Activated naive CD4-positive, alpha-beta T cell treated with anti-CD3 and anti-CD28 coated beads for 36 hours (primary cell): ENCODE measurements at regions of chr5 and their contacts with region 1.

Region 1: DNA sequence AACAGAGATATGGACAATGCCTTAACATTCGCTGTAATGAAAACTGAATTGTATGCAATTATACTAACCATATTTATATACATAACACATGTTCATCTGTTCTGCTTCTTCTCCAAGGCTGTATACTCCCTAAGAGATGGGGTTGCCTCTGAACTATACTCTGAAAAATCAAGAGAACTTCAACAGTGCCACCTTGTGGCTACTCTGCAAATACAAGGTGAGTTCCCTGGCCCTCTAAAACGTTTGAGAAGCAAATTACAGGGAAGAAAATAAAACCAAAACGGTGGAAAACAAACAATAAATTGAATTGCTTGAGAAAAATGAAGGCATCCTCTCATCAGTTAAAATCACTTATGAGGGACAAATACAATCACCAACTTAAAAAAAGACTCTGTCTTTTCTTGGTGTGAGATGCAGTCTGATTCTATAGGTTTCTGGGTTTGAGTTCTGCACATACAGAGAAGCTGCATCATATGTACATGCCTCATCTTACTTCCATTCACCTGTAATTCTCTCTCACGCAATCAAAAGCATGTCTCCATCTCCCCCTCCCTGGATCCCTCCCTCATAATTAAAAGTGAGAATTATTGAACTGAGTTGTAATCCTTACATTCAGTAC is 98.6 kb downstream of the FBXW11 start:
- DNase-seq: peak; percentile 78
- H3K4me3 Mint-ChIP-seq: no peak overlapping the region
- H3K27ac Mint-ChIP-seq: peak overlapping the region; percentile 78
- H3K4me1 Mint-ChIP-seq: peaks cover 63% of the 10 kb centered on the region
- H3K27me3 Mint-ChIP-seq: no peaks in the 10 kb centered on the region

Region 2: DNA sequence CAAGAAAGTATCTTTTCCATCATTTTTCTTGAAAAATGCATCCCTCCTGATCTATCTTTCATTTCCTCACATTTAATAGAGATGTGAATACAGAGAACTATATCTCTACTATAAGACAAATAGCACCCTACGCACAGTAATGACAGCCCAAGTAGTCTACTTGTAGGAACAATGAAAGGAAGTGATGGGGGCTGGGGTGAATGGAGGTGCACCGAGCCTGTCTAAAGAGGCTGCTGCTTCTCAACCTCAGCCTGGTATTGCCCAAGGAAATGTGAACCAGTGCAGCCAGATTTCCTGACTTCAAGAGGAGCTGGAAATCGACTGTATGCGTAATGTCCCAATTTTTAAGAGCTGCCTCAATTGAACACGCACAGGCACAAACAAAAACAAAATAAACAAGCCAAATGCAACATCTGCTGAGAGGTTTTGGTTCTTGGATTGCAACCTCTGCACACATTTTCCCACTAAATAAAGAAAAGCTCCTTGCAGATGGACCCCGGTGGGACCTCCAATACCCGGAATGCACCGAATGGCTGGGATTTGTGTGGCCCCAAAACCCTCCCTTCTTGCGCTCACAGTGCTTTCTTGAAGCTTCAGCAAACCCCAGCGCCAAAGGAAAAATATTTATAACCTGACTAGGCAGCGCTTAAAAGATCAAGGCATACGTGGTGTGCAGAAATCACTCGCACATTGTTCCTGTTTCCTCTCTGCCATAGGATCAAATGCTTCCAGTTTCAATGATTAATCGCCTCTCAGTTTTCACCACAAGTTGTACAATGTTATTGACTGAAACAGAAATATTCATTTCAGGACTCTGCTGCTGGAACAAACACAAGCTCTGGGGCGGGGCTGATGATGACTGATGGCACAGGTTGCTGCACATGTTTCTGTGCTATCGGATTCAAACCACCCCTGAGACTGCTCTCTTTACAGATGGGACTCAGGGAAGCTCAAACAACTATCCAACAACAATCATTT is 1335.7 kb before region 1 on chr5:
- CTCF ChIA-PET with region 1: no interaction called
- intact Hi-C with region 1: loop called (anchors 2 kb)
- DNase-seq: peak; percentile 94
- H3K4me3 Mint-ChIP-seq: no peak overlapping the region
- H3K27ac Mint-ChIP-seq: no peak overlapping the region
- H3K4me1 Mint-ChIP-seq: peaks cover 20% of the 10 kb centered on the region
- H3K27me3 Mint-ChIP-seq: peaks cover 63% of the 10 kb centered on the region

Region 3: GRCh38 chr5:171387345-171387969 is 520.4 kb before region 1 on chr5 and contains the start of gene NPM1:
- CTCF ChIA-PET with region 1: no interaction called
- intact Hi-C with region 1: loop called (anchors 1 kb)
- DNase-seq: peak; percentile 98
- H3K4me3 Mint-ChIP-seq: peak within 1 kb of the TSS; percentile 98
- H3K27ac Mint-ChIP-seq: peak within 1 kb of the TSS; percentile 98
- H3K4me1 Mint-ChIP-seq: peaks cover 37% of the 10 kb centered on the region
- H3K27me3 Mint-ChIP-seq: no peaks in the 10 kb centered on the region
- total RNA-seq, gene NPM1: 3,194 to 3,467 TPM

Region 4: GRCh38 chr5:171629221-171630026 is 278.4 kb before region 1 on chr5:
- CTCF ChIA-PET with region 1: interaction called, 4 read pairs
- intact Hi-C with region 1: loop called (anchors 1 kb)
- DNase-seq: peak; percentile 35
- H3K4me3 Mint-ChIP-seq: no peak overlapping the region
- H3K27ac Mint-ChIP-seq: no peak overlapping the region
- H3K4me1 Mint-ChIP-seq: no peaks in the 10 kb centered on the region
- H3K27me3 Mint-ChIP-seq: peaks cover 28% of the 10 kb centered on the region

Region 5: GRCh38 chr5:171826132-171826531 is 81.7 kb before region 1 on chr5:
- CTCF ChIA-PET with region 1: no interaction called
- intact Hi-C with region 1: no loop called
- DNase-seq: no peak
- H3K4me3 Mint-ChIP-seq: no peak overlapping the region
- H3K27ac Mint-ChIP-seq: no peak overlapping the region
- H3K4me1 Mint-ChIP-seq: no peaks in the 10 kb centered on the region
- H3K27me3 Mint-ChIP-seq: no peaks in the 10 kb centered on the region

Region 6: DNA sequence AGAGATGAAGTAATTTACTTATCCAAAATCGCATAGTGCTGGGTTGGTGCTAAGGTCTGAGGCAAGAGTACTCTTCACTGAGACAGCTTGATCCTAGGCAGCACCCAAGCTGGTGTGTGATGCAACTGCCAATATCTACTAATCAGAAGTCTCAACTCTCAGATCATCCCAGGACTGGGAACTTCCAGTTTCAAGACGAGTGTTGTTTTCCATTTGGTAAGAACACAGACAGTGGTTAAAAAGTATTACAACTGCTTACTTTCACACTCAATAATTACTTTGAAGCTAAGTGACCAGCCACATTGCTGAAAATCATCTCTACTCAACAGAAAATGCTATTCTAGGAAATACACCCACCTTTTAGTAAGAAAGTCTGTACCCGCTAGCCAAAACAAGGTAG is 53.3 kb after region 1 on chr5:
- CTCF ChIA-PET with region 1: interaction called, 36 read pairs
- intact Hi-C with region 1: loop called (anchors 1 kb)
- DNase-seq: peak; percentile 65
- H3K4me3 Mint-ChIP-seq: no peak overlapping the region
- H3K27ac Mint-ChIP-seq: peak overlapping the region; percentile 57
- H3K4me1 Mint-ChIP-seq: peaks cover 89% of the 10 kb centered on the region
- H3K27me3 Mint-ChIP-seq: no peaks in the 10 kb centered on the region

Region 7: DNA sequence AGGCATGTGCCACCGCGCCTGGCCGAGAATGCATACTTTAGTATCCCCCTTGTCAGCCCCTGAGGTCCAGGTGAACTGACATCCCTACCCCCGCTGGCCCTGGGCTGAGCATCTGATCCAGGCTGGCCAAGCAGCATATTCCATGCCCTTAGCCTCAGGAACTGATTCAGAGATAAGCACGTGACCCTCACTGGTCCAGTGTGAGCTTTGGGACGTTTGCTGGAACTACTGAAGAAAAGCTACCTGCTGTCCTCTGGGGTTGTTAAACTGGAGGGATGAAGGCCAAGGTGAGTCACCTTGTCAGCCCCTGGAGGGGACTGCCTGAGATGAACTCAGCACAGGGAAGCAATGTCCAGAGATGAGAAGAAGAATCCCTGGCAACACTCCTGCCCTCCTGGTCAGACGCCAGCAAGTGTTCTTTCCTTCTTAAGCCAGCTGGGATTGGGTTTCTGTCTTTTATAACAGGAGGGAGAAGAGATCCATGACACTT is 157.7 kb after region 1 on chr5:
- CTCF ChIA-PET with region 1: interaction called, 60 read pairs
- intact Hi-C with region 1: loop called (anchors 2 kb)
- DNase-seq: no peak
- H3K4me3 Mint-ChIP-seq: no peak overlapping the region
- H3K27ac Mint-ChIP-seq: no peak overlapping the region
- H3K4me1 Mint-ChIP-seq: peaks cover 56% of the 10 kb centered on the region
- H3K27me3 Mint-ChIP-seq: no peaks in the 10 kb centered on the region

Region 8: GRCh38 chr5:172144291-172144815 is 236.5 kb after region 1 on chr5:
- CTCF ChIA-PET with region 1: no interaction called
- intact Hi-C with region 1: no loop called
- DNase-seq: no peak
- H3K4me3 Mint-ChIP-seq: no peak overlapping the region
- H3K27ac Mint-ChIP-seq: peak overlapping the region; percentile 48
- H3K4me1 Mint-ChIP-seq: peaks cover 84% of the 10 kb centered on the region
- H3K27me3 Mint-ChIP-seq: no peaks in the 10 kb centered on the region

Region 9: DNA sequence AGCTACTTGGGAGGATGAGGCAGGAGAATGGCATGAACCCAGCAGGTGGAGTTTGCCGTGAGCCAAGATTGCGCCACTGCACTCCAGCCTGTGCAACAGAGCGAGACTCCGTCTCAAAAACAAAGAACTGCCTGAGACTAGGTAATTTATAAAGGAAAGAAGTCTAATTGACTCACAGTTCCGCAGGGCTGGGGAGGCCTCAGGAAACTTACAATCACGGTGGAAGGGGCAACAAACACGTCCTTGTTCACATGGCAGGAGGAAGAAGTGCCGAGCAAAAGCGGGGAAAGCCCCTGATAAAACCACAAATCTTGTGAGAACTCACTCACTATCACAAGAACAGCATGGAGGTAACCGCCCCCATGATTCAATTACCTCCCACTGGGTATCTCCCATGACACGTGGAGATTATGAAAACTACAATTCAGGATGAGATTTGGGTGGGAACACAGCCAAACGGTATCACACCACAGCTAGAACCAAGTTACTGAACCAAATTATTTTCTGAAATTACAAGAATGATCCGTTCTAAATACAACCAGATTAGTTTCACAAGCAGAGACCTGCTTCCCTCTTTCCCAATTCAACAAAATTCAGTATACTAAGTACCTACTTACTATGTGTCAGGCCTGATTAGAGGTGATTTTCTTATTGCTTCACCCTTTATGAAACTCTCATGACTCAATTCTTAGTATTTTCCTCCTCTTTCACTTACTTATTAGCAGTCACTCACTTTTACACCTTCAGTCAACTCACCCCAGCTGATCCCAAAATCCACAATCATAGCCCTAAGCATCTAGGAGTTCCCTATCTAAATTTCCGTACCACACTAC is 367.3 kb after region 1 on chr5:
- CTCF ChIA-PET with region 1: no interaction called
- intact Hi-C with region 1: loop called (anchors 1 kb)
- DNase-seq: peak; percentile 88
- H3K4me3 Mint-ChIP-seq: no peak overlapping the region
- H3K27ac Mint-ChIP-seq: peak overlapping the region; percentile 73
- H3K4me1 Mint-ChIP-seq: peaks cover 34% of the 10 kb centered on the region
- H3K27me3 Mint-ChIP-seq: no peaks in the 10 kb centered on the region